CD4-positive, alpha-beta memory T cell (primary cell): ENCODE measurements at regions of chr14 and their contacts with region 1.

Region 1: DNA sequence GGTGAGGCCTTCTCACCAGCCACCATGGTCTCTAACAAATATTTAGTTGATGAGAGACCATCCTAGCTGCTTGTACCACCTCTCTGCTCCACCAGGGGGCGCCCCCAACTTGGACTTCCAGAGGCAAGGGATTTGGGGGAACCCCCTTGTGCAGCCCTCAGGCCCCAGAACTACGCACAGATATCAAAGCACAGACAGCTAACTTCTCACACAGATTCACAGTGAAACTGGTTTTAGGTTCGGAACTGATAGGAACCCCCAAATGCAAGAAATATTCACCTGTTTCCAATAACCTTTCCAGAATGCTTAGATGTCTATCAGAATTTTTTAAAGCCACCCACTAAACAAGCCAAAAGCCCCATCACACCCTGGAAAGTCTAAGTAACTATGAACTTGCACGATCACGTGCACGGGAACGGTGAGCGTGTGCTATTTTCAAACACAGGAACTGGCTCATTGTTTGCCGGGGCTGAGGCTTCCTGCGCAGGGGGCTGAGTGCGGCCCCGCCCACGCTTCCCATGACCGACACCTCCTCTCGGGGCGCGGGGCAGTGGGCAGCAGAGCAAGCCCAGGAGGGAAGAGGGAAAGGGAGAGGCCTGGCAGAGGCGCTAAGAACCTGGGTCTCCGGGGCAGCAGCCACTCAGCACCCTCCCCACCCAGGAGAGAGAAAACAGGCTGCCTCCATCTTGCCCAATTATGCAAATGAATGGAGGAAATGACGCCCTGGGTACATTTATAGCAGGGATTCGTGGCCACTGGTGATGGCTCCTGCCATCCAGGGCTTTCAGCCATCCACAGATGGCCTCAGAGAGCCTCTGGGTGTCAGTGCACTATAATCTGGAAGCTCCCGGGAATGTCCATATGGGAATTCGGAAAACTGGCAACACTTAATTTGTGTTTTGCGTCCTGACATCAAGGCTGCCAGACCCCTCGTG is 79.4 kb upstream of the GPR68 start:
- DNase-seq: peak; percentile 88 to 96 (median 91)
- H3K4me3 ChIP-seq: peak overlapping the region in 1 of 2 donors; percentile 32
- H3K4me3 Mint-ChIP-seq: peak overlapping the region; percentile 82 to 92 (median 84)
- H3K27ac ChIP-seq: peak overlapping the region; percentile 90
- H3K27ac Mint-ChIP-seq: peak overlapping the region; percentile 97 to 99 (median 99)
- H3K4me1 ChIP-seq: peaks cover 83% of the 10 kb centered on the region
- H3K4me1 Mint-ChIP-seq: peaks cover 35 to 85% (median 69%) of the 10 kb centered on the region in 4 donors
- H3K27me3 ChIP-seq: no peaks in the 10 kb centered on the region
- H3K27me3 Mint-ChIP-seq: no peaks in the 10 kb centered on the region

Region 2: DNA sequence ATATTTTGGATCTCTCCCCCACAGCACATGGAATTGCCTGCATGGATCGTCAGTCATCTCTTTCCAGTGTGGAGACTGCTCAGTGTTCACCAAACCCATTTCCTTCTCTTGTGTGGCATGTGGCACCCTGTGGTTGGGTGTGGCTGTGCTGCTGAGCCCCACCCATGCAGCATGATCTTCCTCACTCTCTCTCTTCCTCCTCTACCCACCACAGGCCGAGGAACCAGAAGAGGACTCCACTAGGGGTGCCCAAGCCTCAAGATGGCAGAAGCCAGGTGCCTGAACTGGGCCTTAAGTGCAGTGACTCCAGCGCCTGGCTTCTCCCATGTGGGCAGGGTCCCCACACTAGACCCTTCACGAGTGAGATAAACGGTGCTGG is 12.7 kb before region 1 on chr14:
- CTCF ChIA-PET with region 1: interaction called, 63 read pairs
- POLR2A ChIA-PET with region 1: interaction called, 21 read pairs
- intact Hi-C with region 1: no loop called
- DNase-seq: peak; percentile 71 to 79 (median 77)
- H3K4me3 ChIP-seq: no peak overlapping the region
- H3K4me3 Mint-ChIP-seq: peak overlapping the region in 7 of 8 donors; percentile 61 to 87 (median 79)
- H3K27ac ChIP-seq: peak overlapping the region; percentile 64
- H3K27ac Mint-ChIP-seq: peak overlapping the region; percentile 91 to 99 (median 99)
- H3K4me1 ChIP-seq: peaks cover 64% of the 10 kb centered on the region
- H3K4me1 Mint-ChIP-seq: peaks cover 40 to 82% (median 57%) of the 10 kb centered on the region in 4 donors
- H3K27me3 ChIP-seq: no peaks in the 10 kb centered on the region
- H3K27me3 Mint-ChIP-seq: no peaks in the 10 kb centered on the region

Region 3: GRCh38 chr14:91367173-91368171 is 43.5 kb after region 1 on chr14:
- CTCF ChIA-PET with region 1: interaction called, 5 read pairs
- POLR2A ChIA-PET with region 1: interaction called, 33 read pairs
- intact Hi-C with region 1: loop called (anchors 1 kb)
- DNase-seq: peak; percentile 68 to 97 (median 75)
- H3K4me3 ChIP-seq: peak overlapping the region; percentile 8 to 50
- H3K4me3 Mint-ChIP-seq: peak overlapping the region; percentile 58 to 89 (median 82)
- H3K27ac ChIP-seq: peak overlapping the region; percentile 85
- H3K27ac Mint-ChIP-seq: peak overlapping the region; percentile 94 to 99 (median 97)
- H3K4me1 ChIP-seq: peaks cover 98% of the 10 kb centered on the region
- H3K4me1 Mint-ChIP-seq: peaks cover 63 to 93% (median 76%) of the 10 kb centered on the region in 4 donors
- H3K27me3 ChIP-seq: no peaks in the 10 kb centered on the region
- H3K27me3 Mint-ChIP-seq: no peaks in the 10 kb centered on the region

Region 4: DNA sequence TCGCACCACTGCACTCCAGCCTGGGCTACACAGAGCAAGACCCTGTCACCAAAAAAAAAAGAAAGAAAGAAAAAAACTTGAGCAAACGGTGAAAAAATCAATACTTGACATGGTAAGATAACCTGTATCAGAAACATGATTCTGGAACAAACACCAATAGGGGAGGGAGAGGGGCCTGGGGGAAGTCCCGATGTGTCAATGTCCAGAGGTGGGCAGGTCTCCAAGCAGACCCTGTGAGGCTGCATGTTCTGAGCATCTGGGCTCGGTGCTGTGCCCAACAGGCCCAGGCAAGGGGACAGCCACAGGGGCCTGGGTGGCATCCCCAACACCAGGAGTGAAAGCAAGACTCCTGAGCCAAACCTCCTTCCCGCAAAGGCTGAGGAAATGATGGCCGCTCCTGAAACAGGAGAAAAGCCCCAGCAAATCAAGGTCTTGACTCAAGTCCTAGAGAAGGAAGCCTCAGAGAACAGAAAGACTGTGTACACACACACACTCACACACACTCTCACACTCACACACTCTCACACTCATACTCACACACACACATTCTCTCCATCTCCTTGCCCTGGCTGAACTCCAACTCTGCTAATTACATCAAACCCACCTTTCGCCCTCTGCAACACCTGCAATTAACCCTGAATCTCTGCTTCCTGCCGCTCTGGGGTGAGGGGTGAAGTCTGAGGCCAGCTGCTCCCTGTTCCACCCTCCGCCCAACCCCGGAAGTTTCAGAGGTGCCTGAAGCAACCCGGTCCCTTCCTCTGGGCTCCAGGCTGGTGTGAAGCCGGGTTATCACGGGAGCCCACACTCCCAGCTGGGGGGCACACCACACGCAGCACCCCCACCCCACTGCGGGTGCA is 73.2 kb after region 1 on chr14:
- CTCF ChIA-PET with region 1: interaction called, 38 read pairs
- POLR2A ChIA-PET with region 1: interaction called, 12 read pairs
- intact Hi-C with region 1: no loop called
- DNase-seq: peak; percentile 64 to 85 (median 72)
- H3K4me3 ChIP-seq: peak overlapping the region; percentile 49 to 61
- H3K4me3 Mint-ChIP-seq: peak overlapping the region; percentile 79 to 99 (median 82)
- H3K27ac ChIP-seq: peak overlapping the region; percentile 65
- H3K27ac Mint-ChIP-seq: peak overlapping the region; percentile 90 to 98 (median 95)
- H3K4me1 ChIP-seq: peaks cover 97% of the 10 kb centered on the region
- H3K4me1 Mint-ChIP-seq: peaks cover 70 to 98% (median 84%) of the 10 kb centered on the region in 4 donors
- H3K27me3 ChIP-seq: no peaks in the 10 kb centered on the region
- H3K27me3 Mint-ChIP-seq: no peaks in the 10 kb centered on the region

Region 5: GRCh38 chr14:91424813-91425530 is 101.0 kb after region 1 on chr14:
- CTCF ChIA-PET with region 1: interaction called, 522 read pairs
- POLR2A ChIA-PET with region 1: interaction called, 491 read pairs
- intact Hi-C with region 1: loop called (anchors 1 kb)
- DNase-seq: no peak
- H3K4me3 ChIP-seq: no peak overlapping the region
- H3K4me3 Mint-ChIP-seq: no peak overlapping the region
- H3K27ac ChIP-seq: no peak overlapping the region
- H3K27ac Mint-ChIP-seq: peak overlapping the region in 1 of 7 donors; percentile 18
- H3K4me1 ChIP-seq: peaks cover 8% of the 10 kb centered on the region
- H3K4me1 Mint-ChIP-seq: peaks cover 15 to 22% (median 21%) of the 10 kb centered on the region in 4 donors
- H3K27me3 ChIP-seq: no peaks in the 10 kb centered on the region
- H3K27me3 Mint-ChIP-seq: no peaks in the 10 kb centered on the region